ENCODE measurements at regions of chr6 and their contacts with region 1.

Region 1: GRCh38 chr6:166989427-166990032 is 9.7 kb upstream of the CEP43 start:
- DNase-seq: peak; percentile 11
- H3K4me3 ChIP-seq: no peak overlapping the region
- H3K27ac ChIP-seq: no peak overlapping the region
- H3K27me3 ChIP-seq: no peaks in the 10 kb centered on the region
- CTCF ChIP-seq: peak; percentile 59

Region 2: GRCh38 chr6:166775180-166776081 is 214.1 kb before region 1 on chr6:
- CTCF ChIA-PET with region 1: interaction called, 90 read pairs
- POLR2A ChIA-PET with region 1: no interaction called
- DNase-seq: peak; percentile 52
- H3K4me3 ChIP-seq: no peak overlapping the region
- H3K27ac ChIP-seq: no peak overlapping the region
- H3K27me3 ChIP-seq: peaks cover 8% of the 10 kb centered on the region
- CTCF ChIP-seq: peak; percentile 94

Region 3: GRCh38 chr6:166939345-166939744 is 50.2 kb before region 1 on chr6:
- CTCF ChIA-PET with region 1: no interaction called
- POLR2A ChIA-PET with region 1: no interaction called
- DNase-seq: no peak
- H3K4me3 ChIP-seq: no peak overlapping the region
- H3K27ac ChIP-seq: no peak overlapping the region
- H3K27me3 ChIP-seq: no peaks in the 10 kb centered on the region
- CTCF ChIP-seq: no peak

Region 4: GRCh38 chr6:166950443-166950821 is 39.1 kb before region 1 on chr6:
- CTCF ChIA-PET with region 1: interaction called, 14 read pairs
- POLR2A ChIA-PET with region 1: no interaction called
- DNase-seq: no peak
- H3K4me3 ChIP-seq: no peak overlapping the region
- H3K27ac ChIP-seq: no peak overlapping the region
- H3K27me3 ChIP-seq: no peaks in the 10 kb centered on the region
- CTCF ChIP-seq: no peak

Region 5: DNA sequence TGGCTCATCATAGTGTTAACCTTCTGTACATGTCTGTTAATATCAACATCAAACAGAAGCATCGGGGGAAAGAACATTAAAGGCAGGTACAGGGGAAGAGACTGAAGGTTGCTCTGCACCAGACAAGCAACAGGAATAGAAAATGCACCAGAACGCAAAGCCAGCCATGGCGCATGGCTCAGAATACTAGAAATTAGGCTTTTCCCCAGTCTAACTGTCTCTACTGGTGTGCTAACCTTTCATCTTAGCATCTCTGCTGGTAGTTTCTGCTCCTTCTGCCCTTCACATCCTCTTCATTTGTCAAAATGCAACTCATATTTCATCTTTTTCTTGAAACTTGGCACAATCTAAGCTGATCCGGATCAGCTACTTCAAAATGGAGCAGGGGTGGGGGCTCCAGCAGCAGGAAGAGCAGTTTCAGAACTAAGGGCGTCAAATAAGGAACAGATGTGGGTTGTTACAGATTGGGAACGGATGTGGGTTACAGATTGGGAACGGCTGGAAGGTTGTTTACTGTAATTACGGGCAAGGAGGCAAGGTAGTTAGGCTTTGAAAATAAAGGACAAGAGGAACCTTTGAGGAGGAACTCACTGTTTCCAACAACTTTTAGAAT is 20.0 kb before region 1 on chr6:
- CTCF ChIA-PET with region 1: interaction called, 11 read pairs
- POLR2A ChIA-PET with region 1: no interaction called
- DNase-seq: no peak
- H3K4me3 ChIP-seq: no peak overlapping the region
- H3K27ac ChIP-seq: no peak overlapping the region
- H3K27me3 ChIP-seq: no peaks in the 10 kb centered on the region
- CTCF ChIP-seq: no peak

Region 6: GRCh38 chr6:167005350-167006159 is 16.0 kb after region 1 on chr6:
- CTCF ChIA-PET with region 1: interaction called, 38 read pairs
- POLR2A ChIA-PET with region 1: no interaction called
- DNase-seq: no peak
- H3K4me3 ChIP-seq: no peak overlapping the region
- H3K27ac ChIP-seq: no peak overlapping the region
- H3K27me3 ChIP-seq: no peaks in the 10 kb centered on the region
- CTCF ChIP-seq: no peak

Measured in AG04450 (cell line).